Activated naive CD4-positive, alpha-beta T cell treated with anti-CD3 and anti-CD28 coated beads, Interleukin-2, amount 10 ng/mL, durations not matched to agents 7 days and 5 days (primary cell): ENCODE measurements at regions of chr7 and their contacts with region 1.

Region 1: DNA sequence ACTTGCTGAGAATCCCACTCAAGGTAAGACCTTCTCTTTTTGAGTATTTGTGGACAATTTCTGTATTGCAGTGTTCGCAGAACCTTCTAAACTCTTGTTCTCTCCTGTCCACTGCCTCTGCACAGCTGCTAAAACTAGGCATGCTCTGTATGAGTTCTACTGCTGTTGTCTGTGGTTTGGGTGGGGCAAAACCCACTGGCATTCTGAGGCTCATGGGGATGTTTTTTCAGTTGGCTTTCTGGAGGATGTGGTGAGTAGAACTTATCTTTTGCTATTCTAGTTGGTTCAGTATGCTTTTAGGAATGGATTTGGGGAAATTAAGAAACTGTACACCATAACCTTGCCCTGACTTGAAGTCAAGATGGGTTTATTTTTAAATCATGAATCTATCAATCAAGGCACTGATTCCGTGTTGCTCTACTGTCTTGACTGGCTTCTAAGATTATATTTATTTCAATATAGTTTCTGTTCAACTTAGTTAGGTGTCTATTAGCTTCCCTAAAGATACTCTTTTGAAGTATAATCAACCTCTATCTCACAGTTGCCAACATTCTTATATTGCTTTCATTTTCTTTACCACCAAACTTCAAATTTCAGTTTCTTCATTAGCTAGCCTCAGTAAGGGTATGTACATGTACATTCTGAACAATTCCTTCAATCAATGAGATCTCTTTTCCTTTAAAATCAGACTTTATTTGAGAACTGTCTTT is 25.0 kb upstream of the C1GALT1 start:
- DNase-seq: peak; percentile 84
- H3K4me3 Mint-ChIP-seq: peak overlapping the region; percentile 75
- H3K27ac Mint-ChIP-seq: peak overlapping the region; percentile 96
- H3K4me1 Mint-ChIP-seq: peaks cover 55% of the 10 kb centered on the region
- H3K27me3 Mint-ChIP-seq: no peaks in the 10 kb centered on the region

Region 2: GRCh38 chr7:7182156-7183060 is 25.1 kb after region 1 on chr7 and contains the start of gene C1GALT1:
- CTCF ChIA-PET with region 1: interaction called, 12 read pairs
- DNase-seq: peak; percentile 98
- H3K4me3 Mint-ChIP-seq: peak within 1 kb of the TSS; percentile 88
- H3K27ac Mint-ChIP-seq: peak within 1 kb of the TSS; percentile 100
- H3K4me1 Mint-ChIP-seq: peaks cover 28% of the 10 kb centered on the region
- H3K27me3 Mint-ChIP-seq: no peaks in the 10 kb centered on the region